Head of caudate nucleus (tissue), 42 donors: ENCODE measurements at regions of chr2 and their contacts with region 1.

Region 1: GRCh38 chr2:101831351-101831865 is 133.9 kb downstream of the MAP4K4 start:
- DNase-seq: peak; percentile 44 to 92 (median 79)

Region 2: GRCh38 chr2:101341901-101342624 is 489.3 kb before region 1 on chr2:
- intact Hi-C with region 1: loop called (anchors 10 kb)
- DNase-seq: peak; percentile 54 to 96 (median 84)

Region 3: GRCh38 chr2:101520246-101520645 is 311.2 kb before region 1 on chr2:
- intact Hi-C with region 1: loop called (anchors 5 kb)
- DNase-seq: peak in 1 of 42 donors; percentile 17

Region 4: GRCh38 chr2:101790857-101791256 is 40.6 kb before region 1 on chr2:
- intact Hi-C with region 1: no loop called
- DNase-seq: no peak

Region 5: GRCh38 chr2:101983928-101984327 is 152.5 kb after region 1 on chr2:
- intact Hi-C with region 1: no loop called
- DNase-seq: peak in 1 of 42 donors; percentile 31